ENCODE measurements at regions of chr14 and their contacts with region 1.

Region 1: GRCh38 chr14:32252030-32252670 is 49.1 kb upstream of the RNU6-8 start:
- DNase-seq: peak; percentile 76
- H3K4me3 Mint-ChIP-seq: no peak overlapping the region
- H3K27ac Mint-ChIP-seq: no peak overlapping the region
- H3K4me1 Mint-ChIP-seq: peaks cover 11% of the 10 kb centered on the region
- H3K27me3 Mint-ChIP-seq: no peaks in the 10 kb centered on the region
- CTCF ChIP-seq: peak; percentile 82

Region 2: GRCh38 chr14:31456841-31457664 is 795.1 kb before region 1 on chr14 and contains the start of gene DTD2:
- CTCF ChIA-PET with region 1: interaction called, 11 read pairs
- POLR2A ChIA-PET with region 1: no interaction called
- intact Hi-C with region 1: loop called (anchors 5 kb)
- DNase-seq: peak; percentile 96
- H3K4me3 Mint-ChIP-seq: peak within 1 kb of the TSS; percentile 97
- H3K27ac Mint-ChIP-seq: peak within 1 kb of the TSS; percentile 99
- H3K4me1 Mint-ChIP-seq: peaks cover 14% of the 10 kb centered on the region
- H3K27me3 Mint-ChIP-seq: no peaks in the 10 kb centered on the region
- CTCF ChIP-seq: no peak
- total RNA-seq, gene DTD2: 24.4 TPM in 2 replicates

Region 3: GRCh38 chr14:31926123-31926522 is 326.0 kb before region 1 on chr14:
- CTCF ChIA-PET with region 1: interaction called, 25 read pairs
- POLR2A ChIA-PET with region 1: no interaction called
- intact Hi-C with region 1: loop called (anchors 2 kb)
- DNase-seq: peak; percentile 49
- H3K4me3 Mint-ChIP-seq: no peak overlapping the region
- H3K27ac Mint-ChIP-seq: no peak overlapping the region
- H3K4me1 Mint-ChIP-seq: peaks cover 21% of the 10 kb centered on the region
- H3K27me3 Mint-ChIP-seq: no peaks in the 10 kb centered on the region
- CTCF ChIP-seq: peak; percentile 39

Region 4: GRCh38 chr14:31992011-31992447 is 260.1 kb before region 1 on chr14:
- CTCF ChIA-PET with region 1: no interaction called
- POLR2A ChIA-PET with region 1: no interaction called
- intact Hi-C with region 1: loop called (anchors 10 kb)
- DNase-seq: peak; percentile 90
- H3K4me3 Mint-ChIP-seq: no peak overlapping the region
- H3K27ac Mint-ChIP-seq: peak overlapping the region; percentile 54
- H3K4me1 Mint-ChIP-seq: peaks cover 62% of the 10 kb centered on the region
- H3K27me3 Mint-ChIP-seq: no peaks in the 10 kb centered on the region
- CTCF ChIP-seq: no peak

Region 5: GRCh38 chr14:32217301-32217700 is 34.8 kb before region 1 on chr14:
- CTCF ChIA-PET with region 1: no interaction called
- POLR2A ChIA-PET with region 1: no interaction called
- intact Hi-C with region 1: no loop called
- DNase-seq: no peak
- H3K4me3 Mint-ChIP-seq: no peak overlapping the region
- H3K27ac Mint-ChIP-seq: no peak overlapping the region
- H3K4me1 Mint-ChIP-seq: no peaks in the 10 kb centered on the region
- H3K27me3 Mint-ChIP-seq: no peaks in the 10 kb centered on the region
- CTCF ChIP-seq: no peak

Region 6: DNA sequence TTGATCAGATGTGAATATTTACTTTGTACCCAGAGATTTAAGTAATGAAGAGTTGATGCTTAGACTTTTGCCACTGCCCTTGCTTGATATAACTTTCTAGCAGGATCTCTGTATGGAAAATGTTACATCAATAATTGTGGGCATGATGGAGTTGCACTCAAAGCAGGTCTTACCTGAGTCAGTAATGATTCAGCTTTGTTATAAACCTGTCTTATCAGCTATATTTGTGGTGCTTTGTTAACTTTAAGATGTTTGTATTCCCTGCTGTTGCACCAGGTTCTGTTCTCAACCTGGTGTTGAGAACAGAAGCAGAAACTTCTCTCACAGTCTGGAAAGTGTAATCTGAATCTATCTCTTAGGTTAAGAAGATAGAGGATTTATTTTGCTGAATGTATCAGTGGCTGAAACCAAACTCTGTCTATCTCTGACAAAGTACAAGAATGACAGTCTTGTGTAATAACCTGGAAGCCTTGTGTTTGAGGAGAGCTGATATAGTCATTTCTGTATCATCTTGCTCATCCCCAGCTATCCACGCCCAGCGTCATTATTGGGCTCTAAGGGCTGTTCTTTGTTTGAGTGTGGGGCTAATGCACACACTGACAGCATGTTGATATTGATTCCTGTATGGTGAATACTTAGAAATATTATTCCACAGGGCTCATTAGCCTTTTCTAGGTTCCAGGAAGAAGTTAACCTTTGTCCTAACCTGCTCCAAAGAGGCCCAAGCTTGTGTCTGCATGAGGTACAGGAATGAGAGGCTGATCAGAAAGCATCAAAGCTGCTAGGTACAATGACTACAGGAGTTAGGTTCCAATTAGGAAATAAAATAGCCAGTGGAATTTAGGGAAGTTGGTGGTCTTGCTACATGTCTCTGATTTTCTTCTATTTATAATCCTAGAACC is 80.5 kb after region 1 on chr14:
- CTCF ChIA-PET with region 1: no interaction called
- POLR2A ChIA-PET with region 1: no interaction called
- intact Hi-C with region 1: no loop called
- DNase-seq: no peak
- H3K4me3 Mint-ChIP-seq: no peak overlapping the region
- H3K27ac Mint-ChIP-seq: no peak overlapping the region
- H3K4me1 Mint-ChIP-seq: no peaks in the 10 kb centered on the region
- H3K27me3 Mint-ChIP-seq: no peaks in the 10 kb centered on the region
- CTCF ChIP-seq: no peak

Region 7: GRCh38 chr14:32382704-32383103 is 130.6 kb after region 1 on chr14:
- CTCF ChIA-PET with region 1: interaction called, 9 read pairs
- POLR2A ChIA-PET with region 1: interaction called, 3 read pairs
- intact Hi-C with region 1: loop called (anchors 1 kb)
- DNase-seq: peak; percentile 38
- H3K4me3 Mint-ChIP-seq: no peak overlapping the region
- H3K27ac Mint-ChIP-seq: no peak overlapping the region
- H3K4me1 Mint-ChIP-seq: peaks cover 27% of the 10 kb centered on the region
- H3K27me3 Mint-ChIP-seq: no peaks in the 10 kb centered on the region
- CTCF ChIP-seq: peak; percentile 75

Region 8: DNA sequence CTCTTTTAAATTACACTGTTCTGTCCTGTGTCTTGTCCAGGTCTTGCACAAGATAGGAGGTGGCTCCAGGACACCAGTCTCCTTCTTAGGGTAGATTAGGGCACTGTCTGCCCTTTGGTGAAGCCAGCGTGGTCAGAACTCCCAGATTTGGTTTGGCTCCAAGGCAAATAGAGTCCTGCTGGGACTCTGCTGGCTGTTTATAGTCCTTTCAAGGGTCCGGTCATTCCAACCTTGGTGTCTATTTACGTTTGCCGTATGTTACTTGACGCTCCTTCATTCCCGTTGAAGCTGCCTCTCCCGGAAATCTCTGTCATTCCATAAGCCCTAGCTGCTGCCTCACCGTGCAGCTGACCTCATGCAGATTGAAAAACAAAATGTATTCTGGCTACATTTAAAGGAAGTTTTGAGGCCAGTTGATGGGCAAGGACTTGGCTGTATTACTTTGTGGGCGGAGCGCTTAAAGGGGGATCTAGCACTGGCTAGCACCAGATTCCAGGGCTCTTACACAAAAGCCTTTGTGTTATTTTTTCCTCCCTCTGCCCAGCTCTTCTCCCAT is 257.6 kb after region 1 on chr14:
- CTCF ChIA-PET with region 1: interaction called, 31 read pairs
- POLR2A ChIA-PET with region 1: interaction called, 5 read pairs
- intact Hi-C with region 1: loop called (anchors 2 kb)
- DNase-seq: peak; percentile 94
- H3K4me3 Mint-ChIP-seq: peak overlapping the region; percentile 65
- H3K27ac Mint-ChIP-seq: peak overlapping the region; percentile 93
- H3K4me1 Mint-ChIP-seq: peaks cover 50% of the 10 kb centered on the region
- H3K27me3 Mint-ChIP-seq: no peaks in the 10 kb centered on the region
- CTCF ChIP-seq: no peak

Measured in MCF 10A (cell line).